ENCODE measurements at regions of chr22 and their contacts with region 1.

Region 1: DNA sequence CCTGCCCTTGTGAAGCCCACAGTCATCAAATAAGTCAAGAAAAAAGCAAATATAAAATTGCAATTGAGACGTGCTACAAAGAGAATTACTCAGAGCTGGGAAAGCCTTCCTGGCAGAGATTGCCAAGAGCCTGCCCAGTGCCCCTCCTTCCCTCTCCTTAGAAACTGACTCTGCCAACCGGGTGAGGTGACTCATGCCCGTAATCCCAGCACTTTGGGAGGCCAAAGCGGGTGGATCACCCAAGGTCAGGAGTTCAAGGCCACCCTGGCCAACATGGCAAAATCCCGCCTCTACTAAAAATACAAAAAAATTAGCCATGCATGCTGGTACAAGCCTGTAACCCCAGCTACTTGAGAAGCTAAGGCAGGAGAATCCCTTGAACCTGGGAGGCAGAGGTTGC is 76.0 kb upstream of the RTL6 start:
- DNase-seq: peak; percentile 85
- H3K4me3 ChIP-seq: no peak overlapping the region
- H3K27ac ChIP-seq: no peak overlapping the region
- H3K4me1 ChIP-seq: peaks cover 11% of the 10 kb centered on the region
- H3K27me3 ChIP-seq: peaks cover 2% of the 10 kb centered on the region
- CTCF ChIP-seq: no peak

Region 2: GRCh38 chr22:44497218-44497904 is 76.7 kb before region 1 on chr22:
- CTCF ChIA-PET with region 1: no interaction called
- dilution Hi-C with region 1: no loop called
- in situ Hi-C with region 1: no loop called
- intact Hi-C with region 1: loop called (anchors 5 kb)
- DNase-seq: peak; percentile 3
- H3K4me3 ChIP-seq: peak overlapping the region; percentile 62 to 80 (median 72)
- H3K27ac ChIP-seq: peak overlapping the region; percentile 76
- H3K4me1 ChIP-seq: peaks cover 10% of the 10 kb centered on the region
- H3K27me3 ChIP-seq: no peaks in the 10 kb centered on the region
- CTCF ChIP-seq: no peak